Activated naive CD4-positive, alpha-beta T cell treated with anti-CD3 and anti-CD28 coated beads, Interleukin-2, amount 10 ng/mL, durations not matched to agents 7 days and 5 days (primary cell): ENCODE measurements at regions of chr5 and their contacts with region 1.

Region 1: DNA sequence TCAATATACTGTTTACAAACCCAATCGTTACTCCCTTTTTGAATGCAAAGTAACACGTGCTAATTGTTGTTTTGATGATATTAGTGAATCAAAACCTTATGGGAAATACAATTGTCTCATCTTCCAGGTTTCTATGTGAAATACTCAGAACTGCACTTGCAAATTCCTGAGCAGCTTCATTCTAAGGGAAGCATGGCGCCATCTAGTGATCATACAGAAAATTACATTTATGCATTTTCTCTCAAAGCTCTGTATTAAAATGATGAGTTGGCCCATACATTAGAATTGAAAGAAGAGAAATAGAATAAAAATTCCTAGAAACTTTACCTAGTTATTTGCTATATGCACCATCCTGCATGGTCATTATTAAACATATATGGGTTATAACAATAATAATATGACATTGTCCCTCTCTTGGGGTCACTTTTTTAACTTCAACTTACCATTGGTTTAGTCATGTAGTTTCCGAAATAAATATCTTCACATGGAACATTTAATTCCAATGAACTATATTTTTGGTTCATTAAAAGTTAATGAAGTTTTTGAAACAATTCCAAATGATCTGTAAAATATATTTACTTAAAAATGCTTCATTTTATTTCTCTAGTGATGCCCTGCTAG is 220.0 kb downstream of the PDE4D start:
- DNase-seq: no peak
- H3K4me3 Mint-ChIP-seq: no peak overlapping the region
- H3K27ac Mint-ChIP-seq: no peak overlapping the region
- H3K4me1 Mint-ChIP-seq: no peaks in the 10 kb centered on the region
- H3K27me3 Mint-ChIP-seq: peaks cover 7% of the 10 kb centered on the region

Region 2: GRCh38 chr5:59390074-59390659 is 283.4 kb before region 1 on chr5:
- CTCF ChIA-PET with region 1: interaction called, 28 read pairs
- DNase-seq: peak; percentile 21
- H3K4me3 Mint-ChIP-seq: no peak overlapping the region
- H3K27ac Mint-ChIP-seq: no peak overlapping the region
- H3K4me1 Mint-ChIP-seq: no peaks in the 10 kb centered on the region
- H3K27me3 Mint-ChIP-seq: peaks cover 12% of the 10 kb centered on the region

Region 3: DNA sequence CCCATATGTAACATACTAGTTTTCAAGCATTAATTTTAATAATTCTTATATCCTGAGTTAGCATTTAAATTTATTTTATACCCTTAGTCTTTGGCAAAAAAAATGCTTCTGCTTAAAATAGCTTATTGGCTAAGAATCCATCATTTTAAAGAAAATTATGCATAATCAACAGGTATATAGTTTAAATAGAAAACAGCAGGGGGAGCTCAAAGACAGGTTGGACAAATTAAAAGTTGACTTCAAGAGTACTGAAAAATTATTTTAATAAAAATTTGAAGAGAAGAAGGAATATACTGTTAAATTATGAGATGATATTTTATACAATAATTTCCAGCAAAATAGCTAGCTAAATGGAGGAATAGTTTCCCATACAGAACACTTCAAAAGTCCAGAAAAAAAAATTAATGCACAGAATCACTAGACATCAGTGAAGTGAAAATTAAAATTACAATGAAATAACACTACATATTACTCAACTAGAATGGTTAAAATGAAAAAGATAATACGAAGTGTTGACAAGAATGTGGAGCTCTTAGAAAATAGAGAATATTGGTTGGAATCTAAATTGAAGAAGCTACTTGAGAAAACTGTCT is 167.2 kb before region 1 on chr5:
- CTCF ChIA-PET with region 1: interaction called, 32 read pairs
- DNase-seq: no peak
- H3K4me3 Mint-ChIP-seq: no peak overlapping the region
- H3K27ac Mint-ChIP-seq: no peak overlapping the region
- H3K4me1 Mint-ChIP-seq: no peaks in the 10 kb centered on the region
- H3K27me3 Mint-ChIP-seq: no peaks in the 10 kb centered on the region

Region 4: GRCh38 chr5:59660737-59661136 is 12.8 kb before region 1 on chr5:
- CTCF ChIA-PET with region 1: interaction called, 16 read pairs
- DNase-seq: no peak
- H3K4me3 Mint-ChIP-seq: no peak overlapping the region
- H3K27ac Mint-ChIP-seq: no peak overlapping the region
- H3K4me1 Mint-ChIP-seq: peaks cover 12% of the 10 kb centered on the region
- H3K27me3 Mint-ChIP-seq: no peaks in the 10 kb centered on the region